Activated T-helper 2 cell treated with anti-CD3 and anti-CD28 coated beads, Interferon-gamma antibody, Interleukin-2, Interleukin-4, amounts not matched to agents 10 μg/mL and 5 μg/mL and 100 μg/mL, durations not matched to agents 14 hours and 24 hours and 36 hours (primary cell): ENCODE measurements at regions of chr18 and their contacts with region 1.

Region 1: GRCh38 chr18:9913526-9914333 is at the start of gene VAPA:
- DNase-seq: peak; percentile 92
- H3K4me3 Mint-ChIP-seq: peak within 1 kb of the TSS; percentile 87
- H3K27ac Mint-ChIP-seq: peak within 1 kb of the TSS; percentile 90
- H3K4me1 Mint-ChIP-seq: peaks cover 24% of the 10 kb centered on the region
- H3K27me3 Mint-ChIP-seq: peaks cover 16% of the 10 kb centered on the region
- total RNA-seq, gene VAPA: 216 and 223 TPM in 2 replicates

Region 2: GRCh38 chr18:9136315-9137155 is 777.2 kb before region 1 on chr18 and contains the start of gene ANKRD12:
- intact Hi-C with region 1: loop called (anchors 5 kb)
- DNase-seq: peak; percentile 98
- H3K4me3 Mint-ChIP-seq: peak within 1 kb of the TSS; percentile 95
- H3K27ac Mint-ChIP-seq: peak within 1 kb of the TSS; percentile 99
- H3K4me1 Mint-ChIP-seq: peaks cover 54% of the 10 kb centered on the region
- H3K27me3 Mint-ChIP-seq: no peaks in the 10 kb centered on the region
- total RNA-seq, gene ANKRD12: 66.0 and 68.7 TPM in 2 replicates

Region 3: GRCh38 chr18:9474983-9475642 is 438.6 kb before region 1 on chr18 and contains the start of gene RALBP1:
- intact Hi-C with region 1: loop called (anchors 1 kb)
- DNase-seq: peak; percentile 98
- H3K4me3 Mint-ChIP-seq: peak within 1 kb of the TSS; percentile 89
- H3K27ac Mint-ChIP-seq: peak within 1 kb of the TSS; percentile 88
- H3K4me1 Mint-ChIP-seq: peaks cover 21% of the 10 kb centered on the region
- H3K27me3 Mint-ChIP-seq: peaks cover 20% of the 10 kb centered on the region
- total RNA-seq, gene RALBP1: 39.2 and 40.1 TPM in 2 replicates

Region 4: GRCh38 chr18:9708057-9708433 is 205.7 kb before region 1 on chr18 and contains the start of gene RAB31:
- intact Hi-C with region 1: loop called (anchors 5 kb)
- DNase-seq: no peak
- H3K4me3 Mint-ChIP-seq: peak within 1 kb of the TSS; percentile 77
- H3K27ac Mint-ChIP-seq: no peak within 1 kb of the TSS
- H3K4me1 Mint-ChIP-seq: peaks cover 29% of the 10 kb centered on the region
- H3K27me3 Mint-ChIP-seq: peaks cover 79% of the 10 kb centered on the region
- total RNA-seq, gene RAB31: 0.73 and 0.80 TPM in 2 replicates

Region 5: GRCh38 chr18:9876867-9877654 is 36.7 kb before region 1 on chr18:
- intact Hi-C with region 1: loop called (anchors 1 kb)
- DNase-seq: peak; percentile 28
- H3K4me3 Mint-ChIP-seq: peak overlapping the region; percentile 9
- H3K27ac Mint-ChIP-seq: peak overlapping the region; percentile 81
- H3K4me1 Mint-ChIP-seq: peaks cover 25% of the 10 kb centered on the region
- H3K27me3 Mint-ChIP-seq: no peaks in the 10 kb centered on the region

Region 6: DNA sequence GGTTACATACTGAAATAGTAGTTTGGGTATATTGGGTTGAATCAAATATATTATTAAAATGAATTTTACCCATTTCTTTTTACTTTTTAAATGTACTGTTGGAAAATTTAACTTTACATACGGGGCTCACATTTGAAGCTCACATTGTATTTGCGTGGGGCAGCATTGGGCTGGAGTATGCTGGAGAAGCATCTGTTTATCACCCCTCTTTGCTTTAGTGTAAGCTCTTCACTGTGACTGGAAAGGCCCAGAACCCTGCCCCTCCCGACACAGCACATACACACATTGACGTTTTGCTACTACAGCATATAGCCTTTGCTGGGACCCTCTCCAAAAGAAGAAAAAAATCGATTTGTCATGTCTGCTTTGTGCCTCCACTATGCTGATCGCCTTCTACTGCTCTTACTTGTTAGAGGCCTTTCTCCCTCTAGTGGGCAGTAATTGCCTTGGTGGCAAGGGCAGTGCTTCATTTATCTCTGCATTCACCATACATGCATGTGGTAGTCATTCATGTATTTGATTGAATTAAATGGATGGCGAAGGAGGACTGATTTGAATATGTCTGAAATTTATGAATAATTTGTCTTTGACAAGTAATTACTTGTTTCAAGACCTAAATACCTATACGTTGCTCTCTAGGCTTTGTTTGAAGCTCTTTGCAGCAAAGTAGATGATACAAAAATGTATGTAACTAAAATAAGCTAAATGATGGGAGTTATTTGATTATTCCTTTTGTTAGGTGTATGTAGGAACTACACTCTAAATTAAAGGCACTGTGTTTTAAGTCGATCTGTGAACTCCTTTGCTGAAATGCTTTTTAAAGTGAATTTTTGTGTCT is 37.5 kb after region 1 on chr18:
- intact Hi-C with region 1: loop called (anchors 5 kb)
- DNase-seq: no peak
- H3K4me3 Mint-ChIP-seq: no peak overlapping the region
- H3K27ac Mint-ChIP-seq: no peak overlapping the region
- H3K4me1 Mint-ChIP-seq: peaks cover 4% of the 10 kb centered on the region
- H3K27me3 Mint-ChIP-seq: no peaks in the 10 kb centered on the region

Region 7: GRCh38 chr18:10006311-10006893 is 92.7 kb after region 1 on chr18:
- intact Hi-C with region 1: no loop called
- DNase-seq: no peak
- H3K4me3 Mint-ChIP-seq: no peak overlapping the region
- H3K27ac Mint-ChIP-seq: no peak overlapping the region
- H3K4me1 Mint-ChIP-seq: no peaks in the 10 kb centered on the region
- H3K27me3 Mint-ChIP-seq: peaks cover 3% of the 10 kb centered on the region